A549 (cell line): ENCODE measurements at regions of chr2 and their contacts with region 1.

Region 1: GRCh38 chr2:20225294-20226151 is 593 bp upstream of the SDC1 start:
- DNase-seq: peak; percentile 84 to 88
- ATAC-seq: peak; percentile 65 to 87
- H3K4me3 ChIP-seq: peak overlapping the region; percentile 95
- H3K27ac ChIP-seq: peak overlapping the region; percentile 96 to 97
- H3K4me1 ChIP-seq: peaks cover 33% of the 10 kb centered on the region
- CTCF ChIP-seq: peak; percentile 93
- EP300 ChIP-seq: no peak
- POLR2A ChIP-seq: no peak
- RAD21 ChIP-seq: peak; percentile 79 to 96

Region 2: DNA sequence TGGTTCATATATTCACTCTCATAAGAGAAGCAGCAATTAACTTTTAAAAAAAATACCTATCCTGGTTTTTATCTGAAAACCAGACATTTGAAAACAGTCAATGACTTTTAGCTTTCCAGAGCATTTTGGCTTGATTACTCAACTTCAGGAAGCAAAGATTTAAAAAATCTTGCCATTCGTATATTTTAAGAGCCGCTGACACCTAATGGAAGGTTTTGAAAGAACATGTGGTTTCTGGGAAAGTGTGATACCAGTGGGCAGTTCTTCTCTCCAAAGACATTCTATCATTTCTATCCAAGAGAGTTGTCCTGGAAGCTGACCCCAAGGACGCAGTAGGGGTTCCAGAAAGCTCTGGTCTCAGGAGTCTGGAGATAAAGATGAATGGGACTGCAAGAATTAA is 558.4 kb before region 1 on chr2:
- CTCF ChIA-PET with region 1: no interaction called
- POLR2A ChIA-PET with region 1: no interaction called
- DNase-seq: peak; percentile 40 to 64
- ATAC-seq: peak; percentile 63 to 82; a peak in 5 of 6 replicates
- H3K4me3 ChIP-seq: no peak overlapping the region
- H3K27ac ChIP-seq: peak overlapping the region; percentile 34 to 53; a peak in 5 of 6 replicates
- H3K4me1 ChIP-seq: peaks cover 14% of the 10 kb centered on the region; the same call in 2 of the 3 replicates
- CTCF ChIP-seq: peak; percentile 76
- EP300 ChIP-seq: no peak
- POLR2A ChIP-seq: no peak
- RAD21 ChIP-seq: peak; percentile 80 to 93

Region 3: DNA sequence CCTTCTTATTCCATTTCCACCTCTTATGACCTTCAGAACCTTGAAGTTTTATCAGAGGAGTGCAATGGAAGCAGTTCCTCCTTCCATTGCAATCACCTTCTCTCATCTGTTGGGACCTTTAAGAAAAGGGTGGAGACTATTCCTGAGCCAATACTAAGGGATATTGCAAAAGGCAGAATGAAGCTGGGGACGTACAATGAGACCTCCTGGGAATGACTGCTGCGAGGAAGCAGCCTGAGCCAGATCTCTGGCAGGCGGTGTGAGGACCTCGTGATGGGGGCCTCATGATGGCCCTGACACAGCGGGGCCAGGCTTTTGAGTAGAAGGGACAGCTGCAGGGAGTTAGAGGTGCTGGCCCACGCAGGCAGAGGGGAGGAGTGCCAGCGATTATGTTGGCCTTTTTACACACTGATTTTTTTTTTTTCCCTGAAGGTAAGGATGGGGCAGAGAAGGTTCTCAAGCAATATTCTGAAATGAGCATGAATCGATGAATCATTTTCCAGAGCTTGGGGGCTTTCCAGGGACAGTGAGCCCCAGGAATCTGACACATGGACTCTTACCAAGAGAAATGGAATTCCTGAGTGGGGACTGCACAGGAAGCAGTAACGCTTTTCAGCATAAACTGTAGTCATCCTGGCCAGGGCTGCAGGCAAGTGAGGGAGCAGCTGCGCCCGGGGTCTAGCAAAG is 134.1 kb before region 1 on chr2:
- CTCF ChIA-PET with region 1: interaction called, 15 read pairs
- POLR2A ChIA-PET with region 1: no interaction called
- DNase-seq: peak; percentile 39 to 49
- ATAC-seq: peak; percentile 58 to 66
- H3K4me3 ChIP-seq: no peak overlapping the region
- H3K27ac ChIP-seq: peak overlapping the region; percentile 70 to 82
- H3K4me1 ChIP-seq: peaks cover 40% of the 10 kb centered on the region
- CTCF ChIP-seq: no peak
- EP300 ChIP-seq: no peak
- POLR2A ChIP-seq: no peak
- RAD21 ChIP-seq: no peak

Region 4: GRCh38 chr2:20135631-20136050 is 89.9 kb before region 1 on chr2:
- CTCF ChIA-PET with region 1: interaction called, 202 read pairs
- POLR2A ChIA-PET with region 1: interaction called, 5 read pairs
- DNase-seq: peak; percentile 71 to 75
- ATAC-seq: peak; percentile 81 to 90
- H3K4me3 ChIP-seq: no peak overlapping the region
- H3K27ac ChIP-seq: peak overlapping the region; percentile 10 to 61; a peak in 5 of 6 replicates
- H3K4me1 ChIP-seq: peaks cover 26% of the 10 kb centered on the region
- CTCF ChIP-seq: peak; percentile 89
- EP300 ChIP-seq: no peak
- POLR2A ChIP-seq: no peak
- RAD21 ChIP-seq: peak; percentile 91 to 92

Region 5: GRCh38 chr2:20179755-20180594 is 45.5 kb before region 1 on chr2:
- CTCF ChIA-PET with region 1: interaction called, 67 read pairs
- POLR2A ChIA-PET with region 1: interaction called, 15 read pairs
- DNase-seq: peak; percentile 94 to 95
- ATAC-seq: peak; percentile 73 to 85
- H3K4me3 ChIP-seq: no peak overlapping the region
- H3K27ac ChIP-seq: peak overlapping the region; percentile 90 to 98
- H3K4me1 ChIP-seq: peaks cover 67% of the 10 kb centered on the region
- CTCF ChIP-seq: no peak; the same call in 2 of the 3 replicates
- EP300 ChIP-seq: peak in 1 of 2 experiments; percentile 40; a peak in 1 of 5 replicates
- POLR2A ChIP-seq: peak; percentile 57
- RAD21 ChIP-seq: peak; percentile 39 to 65; a peak in 4 of 5 replicates

Region 6: GRCh38 chr2:20242060-20243006 is 16.8 kb after region 1 on chr2:
- CTCF ChIA-PET with region 1: interaction called, 74 read pairs
- POLR2A ChIA-PET with region 1: interaction called, 3 read pairs
- DNase-seq: peak in 1 of 2 experiments; percentile 50
- ATAC-seq: peak; percentile 65 to 73
- H3K4me3 ChIP-seq: no peak overlapping the region
- H3K27ac ChIP-seq: no peak overlapping the region
- H3K4me1 ChIP-seq: no peaks in the 10 kb centered on the region
- CTCF ChIP-seq: peak; percentile 58
- EP300 ChIP-seq: no peak
- POLR2A ChIP-seq: no peak
- RAD21 ChIP-seq: 0 out of 5 replicates have a peak, but pooled peaks of 1 of the 2 experiments have one; percentile 23

Region 7: GRCh38 chr2:20326163-20326780 is 100.7 kb after region 1 on chr2:
- CTCF ChIA-PET with region 1: interaction called, 15 read pairs
- POLR2A ChIA-PET with region 1: no interaction called
- DNase-seq: peak; percentile 50 to 66
- ATAC-seq: peak; percentile 97 to 98
- H3K4me3 ChIP-seq: no peak overlapping the region
- H3K27ac ChIP-seq: no peak overlapping the region
- H3K4me1 ChIP-seq: peaks cover 21% of the 10 kb centered on the region
- CTCF ChIP-seq: peak; percentile 95
- EP300 ChIP-seq: no peak
- POLR2A ChIP-seq: no peak
- RAD21 ChIP-seq: peak; percentile 69